HCT116 (cell line): ENCODE measurements at regions of chr12 and their contacts with region 1.

Region 1: DNA sequence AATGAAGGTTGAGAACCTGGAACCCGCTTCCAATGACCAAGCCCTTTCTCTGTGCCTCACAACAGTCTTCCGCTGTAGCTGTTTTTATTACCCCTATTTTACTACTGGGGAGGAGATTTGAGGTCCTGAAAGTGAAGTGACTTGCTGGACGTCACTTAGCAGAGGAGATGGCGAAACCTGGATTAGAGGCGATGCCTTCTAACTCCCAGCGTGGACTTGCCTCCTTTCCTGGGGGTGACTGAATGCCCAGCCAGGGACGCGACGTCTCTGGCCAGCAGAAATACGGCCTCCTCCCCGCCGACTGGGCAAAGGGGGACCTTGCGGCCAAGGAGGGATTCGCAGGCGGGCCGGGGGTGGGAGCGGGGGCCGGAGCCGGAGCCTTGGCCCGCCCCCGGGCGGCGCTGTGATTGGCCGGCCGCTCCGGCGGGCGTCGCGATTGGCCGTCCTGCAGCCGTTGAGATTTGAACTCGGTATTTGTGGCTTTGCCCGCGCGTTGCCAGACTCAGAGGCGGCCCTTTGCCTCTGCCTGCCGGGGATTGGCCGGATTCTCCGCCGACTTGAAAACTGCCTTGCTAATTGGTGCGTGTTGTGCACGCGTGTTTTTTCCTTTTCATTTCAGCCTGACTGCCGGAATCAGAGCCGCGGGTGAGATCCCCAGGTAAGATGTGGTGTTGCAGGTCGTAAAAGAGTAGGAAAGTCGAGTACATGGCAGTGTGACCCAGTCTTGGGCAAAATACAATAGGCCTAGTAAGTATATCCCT is at the start of gene NCAPD2:
- DNase-seq: peak; percentile 91
- ATAC-seq: peak; percentile 90
- H3K4me3 ChIP-seq: peak within 1 kb of the TSS; percentile 86 to 90
- H3K27ac ChIP-seq: peak within 1 kb of the TSS; percentile 97
- H3K4me1 ChIP-seq: peaks cover 12 to 19% of the 10 kb centered on the region in 2 experiments
- H3K27me3 ChIP-seq: no peaks in the 10 kb centered on the region
- CTCF ChIP-seq: peak in 1 of 3 experiments; percentile 24; a peak in 2 of 6 replicates
- POLR2A ChIP-seq: peak; percentile 27
- RAD21 ChIP-seq: no peak
- total RNA-seq, gene NCAPD2: 177 TPM

Region 2: DNA sequence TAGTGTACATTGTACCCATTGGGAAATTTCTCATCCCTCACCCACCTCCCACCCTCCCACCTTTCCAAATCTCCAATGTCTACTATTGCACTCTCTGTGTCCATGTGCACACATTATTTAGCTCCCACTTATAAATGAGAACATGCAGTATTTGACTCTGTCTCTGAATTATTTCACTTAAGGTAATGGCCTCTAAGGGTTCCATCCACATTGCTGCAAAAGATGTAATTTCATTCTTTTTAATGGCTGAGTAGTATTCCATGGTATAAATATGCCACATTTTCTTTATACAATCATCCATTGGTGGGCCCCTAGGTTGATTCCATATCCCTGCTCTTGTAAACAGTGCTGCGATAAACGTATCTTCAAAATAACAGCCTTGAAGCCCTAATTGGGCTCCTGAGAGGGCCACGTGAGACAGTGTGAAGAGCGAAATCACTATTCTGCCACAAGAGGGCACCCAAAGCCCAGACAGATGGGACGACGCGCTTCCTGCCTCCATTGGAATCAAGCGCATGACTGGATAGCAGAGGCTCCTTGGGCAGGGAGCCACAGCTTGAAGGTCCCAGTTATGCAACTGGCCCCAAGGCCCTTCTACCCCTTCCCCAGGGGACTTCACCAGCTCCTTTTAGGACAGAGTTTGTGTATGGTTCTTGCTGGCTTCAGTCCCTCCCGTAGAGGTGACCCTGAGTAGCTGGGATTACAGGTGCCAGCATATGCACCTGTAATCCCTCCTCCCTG is 70.2 kb before region 1 on chr12:
- CTCF ChIA-PET with region 1: no interaction called
- POLR2A ChIA-PET with region 1: no interaction called
- RAD21 ChIA-PET with region 1: no interaction called
- intact Hi-C with region 1: loop called (anchors 2 kb)
- DNase-seq: peak; percentile 84
- ATAC-seq: peak; percentile 97
- H3K4me3 ChIP-seq: no peak overlapping the region
- H3K27ac ChIP-seq: no peak overlapping the region
- H3K4me1 ChIP-seq: peaks cover 4 to 20% of the 10 kb centered on the region in 2 experiments; a peak in 3 of 4 replicates
- H3K27me3 ChIP-seq: no peaks in the 10 kb centered on the region
- CTCF ChIP-seq: peak; percentile 78 to 90 (median 90)
- POLR2A ChIP-seq: peak; percentile 31
- RAD21 ChIP-seq: peak; percentile 97

Region 3: DNA sequence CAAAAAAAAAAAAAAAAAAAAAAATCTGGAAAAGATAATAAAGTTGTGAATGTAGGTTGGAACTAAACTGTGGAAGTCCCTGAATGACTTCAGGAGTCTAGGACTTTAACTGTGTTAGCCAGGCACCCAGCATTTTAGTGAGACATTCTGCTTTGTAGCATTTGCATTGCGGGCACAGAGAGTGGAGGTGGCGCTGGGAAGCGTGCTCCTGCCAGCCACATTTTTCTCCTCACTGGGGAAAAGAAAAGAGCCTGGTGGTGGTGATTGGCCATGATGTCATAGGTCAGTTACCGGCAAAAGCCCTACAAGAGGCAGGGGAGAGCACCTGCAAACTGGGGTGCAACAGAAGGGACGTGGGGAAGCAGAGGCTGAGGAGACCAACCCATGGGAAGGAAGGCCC is 31.0 kb after region 1 on chr12:
- CTCF ChIA-PET with region 1: no interaction called
- POLR2A ChIA-PET with region 1: no interaction called
- RAD21 ChIA-PET with region 1: no interaction called
- intact Hi-C with region 1: no loop called
- DNase-seq: no peak
- ATAC-seq: no peak
- H3K4me3 ChIP-seq: no peak overlapping the region
- H3K27ac ChIP-seq: no peak overlapping the region
- H3K4me1 ChIP-seq: no peaks in the 10 kb centered on the region
- H3K27me3 ChIP-seq: no peaks in the 10 kb centered on the region
- CTCF ChIP-seq: no peak
- POLR2A ChIP-seq: no peak
- RAD21 ChIP-seq: no peak